Mammary epithelial cell (primary cell): ENCODE measurements at regions of chr2 and their contacts with region 1.

Region 1: DNA sequence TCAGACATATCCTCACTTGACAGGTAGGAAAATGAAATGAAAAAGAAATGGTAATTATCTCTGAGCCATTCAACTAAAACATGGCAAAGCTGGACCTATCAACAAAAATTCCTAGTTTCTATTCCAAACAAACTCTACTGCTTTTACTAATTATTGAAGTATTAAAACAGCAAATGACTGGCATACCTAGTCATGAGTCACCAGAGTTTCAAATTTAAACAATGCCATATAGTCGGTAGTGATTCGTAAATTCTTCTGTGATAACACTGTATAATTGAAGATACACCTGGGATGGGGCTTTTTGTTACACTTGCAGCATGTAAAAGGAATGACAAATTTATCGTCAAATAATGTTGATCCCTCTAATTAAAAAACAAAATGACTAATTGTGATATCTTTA is 153.1 kb upstream of the THUMPD2 start:
- DNase-seq: peak; percentile 15
- H3K4me3 ChIP-seq: no peak overlapping the region
- H3K27ac ChIP-seq: no peak overlapping the region
- H3K4me1 ChIP-seq: peaks cover 3% of the 10 kb centered on the region
- H3K27me3 ChIP-seq: no peaks in the 10 kb centered on the region
- CTCF ChIP-seq: no peak

Region 2: DNA sequence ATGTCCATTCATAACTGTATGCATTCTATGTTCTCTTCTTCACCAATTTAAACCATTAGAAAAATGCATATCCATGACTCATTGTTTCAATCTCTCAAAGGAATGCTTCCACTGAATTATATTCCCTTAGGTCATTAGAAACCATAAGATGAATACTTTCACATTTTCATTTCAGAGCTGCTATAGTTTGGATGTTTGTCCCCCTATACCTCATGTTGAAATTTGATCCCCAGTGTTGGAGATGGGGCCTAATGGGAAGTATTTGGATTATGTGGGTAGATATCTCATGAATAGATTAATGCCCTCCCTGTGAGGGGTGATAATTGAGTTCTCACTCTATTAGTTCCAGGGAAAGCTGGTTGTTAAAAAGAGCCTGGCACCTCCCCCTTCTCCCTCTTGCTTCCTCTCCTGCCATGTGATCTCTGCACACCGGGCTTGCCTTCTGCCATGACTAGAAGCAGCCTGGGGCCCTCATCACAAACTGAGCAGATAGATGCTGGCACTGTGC is 188.9 kb before region 1 on chr2:
- CTCF ChIA-PET with region 1: no interaction called
- dilution Hi-C with region 1: no loop called
- in situ Hi-C with region 1: no loop called
- intact Hi-C with region 1: no loop called
- DNase-seq: peak; percentile 44
- H3K4me3 ChIP-seq: no peak overlapping the region
- H3K27ac ChIP-seq: peak overlapping the region; percentile 48
- H3K4me1 ChIP-seq: peaks cover 27% of the 10 kb centered on the region
- H3K27me3 ChIP-seq: no peaks in the 10 kb centered on the region
- CTCF ChIP-seq: no peak

Region 3: GRCh38 chr2:40095000-40095399 is 162.8 kb after region 1 on chr2:
- CTCF ChIA-PET with region 1: no interaction called
- dilution Hi-C with region 1: no loop called
- in situ Hi-C with region 1: no loop called
- intact Hi-C with region 1: loop called (anchors 5 kb)
- DNase-seq: peak; percentile 82
- H3K4me3 ChIP-seq: no peak overlapping the region
- H3K27ac ChIP-seq: peak overlapping the region; percentile 14
- H3K4me1 ChIP-seq: peaks cover 40% of the 10 kb centered on the region
- H3K27me3 ChIP-seq: no peaks in the 10 kb centered on the region
- CTCF ChIP-seq: no peak